AG04449 (cell line): ENCODE measurements at regions of chr9 and their contacts with region 1.

Region 1: DNA sequence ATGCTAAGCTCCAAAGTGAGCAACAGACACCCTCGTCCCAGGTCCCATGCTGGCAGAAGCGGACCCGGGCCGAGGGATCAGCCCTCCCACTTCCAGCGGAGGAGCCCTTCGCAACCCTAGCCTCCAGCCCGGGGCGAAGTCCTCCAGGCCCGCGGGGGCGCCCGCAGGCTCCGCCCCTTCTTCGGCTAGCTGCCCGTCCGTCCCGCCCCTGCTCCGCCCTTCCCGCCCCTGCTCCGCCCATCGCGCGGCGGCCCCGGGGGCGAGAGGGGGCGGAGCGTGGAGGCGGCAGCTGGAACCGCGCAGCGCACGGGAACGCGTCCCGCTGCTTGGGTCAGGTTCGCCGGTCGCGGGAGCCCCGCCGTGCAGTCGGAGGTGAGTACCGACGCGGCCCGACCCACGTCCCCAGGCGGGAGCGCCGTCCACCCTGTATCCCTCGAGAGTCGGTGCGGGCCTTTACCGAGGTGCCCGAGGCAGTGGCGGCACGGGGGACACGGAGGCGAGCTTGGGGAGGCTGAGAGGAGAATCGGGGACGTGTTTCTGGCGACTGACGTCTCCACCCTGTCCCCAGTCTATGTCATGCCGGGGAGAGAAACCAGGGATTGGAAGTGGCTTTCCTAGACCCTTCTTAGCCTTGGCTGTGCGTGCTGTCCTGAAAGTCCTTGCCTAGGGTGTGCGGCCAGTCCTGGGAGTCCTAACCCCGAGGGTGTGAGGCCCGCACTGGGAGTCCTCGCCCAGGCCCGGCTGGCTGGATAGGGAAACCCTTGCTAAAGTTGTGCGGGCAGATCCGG is at the start of gene ACO1:
- DNase-seq: no peak
- H3K4me3 ChIP-seq: peak within 1 kb of the TSS; percentile 85
- CTCF ChIP-seq: no peak

Region 2: DNA sequence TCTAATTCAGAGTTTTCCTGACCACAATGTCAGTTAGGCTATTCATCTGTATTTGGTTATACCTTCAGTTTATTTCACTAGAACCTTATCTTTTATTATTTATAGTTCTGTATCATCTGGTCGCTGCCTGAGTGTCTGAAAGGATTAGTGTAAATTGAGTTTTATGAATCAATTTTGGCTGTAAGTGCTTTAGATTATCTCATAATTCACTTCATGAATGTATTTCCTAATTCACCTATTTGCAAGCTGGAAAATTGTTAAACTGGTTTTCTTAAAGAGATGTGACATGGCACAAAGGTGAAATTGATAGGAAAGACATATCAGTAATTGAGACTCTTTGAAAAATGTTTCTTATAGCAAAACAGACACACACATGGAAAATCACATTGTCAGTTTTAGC is 242.5 kb before region 1 on chr9:
- CTCF ChIA-PET with region 1: no interaction called
- POLR2A ChIA-PET with region 1: no interaction called
- DNase-seq: no peak
- H3K4me3 ChIP-seq: no peak overlapping the region
- CTCF ChIP-seq: no peak

Region 3: DNA sequence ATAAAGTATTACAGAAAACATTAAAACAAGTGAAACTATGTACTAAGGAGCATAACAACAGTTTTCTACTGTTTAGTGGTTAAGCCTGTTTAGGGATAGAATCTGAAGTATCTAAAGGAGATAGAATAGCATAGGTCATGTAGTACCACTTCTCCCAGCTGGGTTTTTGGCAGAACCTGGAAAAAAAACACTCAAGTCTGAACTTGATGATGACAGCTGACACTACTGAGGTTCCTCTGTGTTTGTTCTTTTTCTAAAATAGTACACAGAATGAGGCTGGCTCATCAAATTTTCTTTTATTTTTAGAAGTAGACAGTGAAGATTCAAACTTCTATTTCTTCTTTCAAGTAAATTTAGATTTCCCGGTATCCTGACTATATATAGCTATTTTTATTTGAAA is 204.0 kb before region 1 on chr9:
- CTCF ChIA-PET with region 1: no interaction called
- POLR2A ChIA-PET with region 1: no interaction called
- DNase-seq: no peak
- H3K4me3 ChIP-seq: no peak overlapping the region
- CTCF ChIP-seq: no peak

Region 4: GRCh38 chr9:32431940-32432555 is 47.5 kb after region 1 on chr9:
- CTCF ChIA-PET with region 1: interaction called, 233 read pairs
- POLR2A ChIA-PET with region 1: interaction called, 5 read pairs
- DNase-seq: no peak
- H3K4me3 ChIP-seq: no peak overlapping the region
- CTCF ChIP-seq: peak; percentile 53

Region 5: GRCh38 chr9:32566770-32567169 is 182.2 kb after region 1 on chr9:
- CTCF ChIA-PET with region 1: interaction called, 241 read pairs
- POLR2A ChIA-PET with region 1: interaction called, 9 read pairs
- DNase-seq: no peak
- H3K4me3 ChIP-seq: no peak overlapping the region
- CTCF ChIP-seq: no peak

Region 6: GRCh38 chr9:32579706-32580331 is 195.3 kb after region 1 on chr9:
- CTCF ChIA-PET with region 1: interaction called, 1,093 read pairs
- POLR2A ChIA-PET with region 1: interaction called, 6 read pairs
- DNase-seq: no peak
- H3K4me3 ChIP-seq: no peak overlapping the region
- CTCF ChIP-seq: peak; percentile 88

Region 7: GRCh38 chr9:32968101-32969011 is 583.8 kb after region 1 on chr9:
- CTCF ChIA-PET with region 1: interaction called, 186 read pairs
- POLR2A ChIA-PET with region 1: interaction called, 3 read pairs
- DNase-seq: no peak
- H3K4me3 ChIP-seq: no peak overlapping the region
- CTCF ChIP-seq: peak; percentile 51